Lower leg skin (tissue), 4 donors: ENCODE measurements at regions of chr2 and their contacts with region 1.

Region 1: GRCh38 chr2:209977386-209978239 is 24.8 kb upstream of the RPE start:
- DNase-seq: no peak
- H3K4me3 ChIP-seq: no peak overlapping the region
- CTCF ChIP-seq: no peak
- POLR2A ChIP-seq: no peak

Region 2: DNA sequence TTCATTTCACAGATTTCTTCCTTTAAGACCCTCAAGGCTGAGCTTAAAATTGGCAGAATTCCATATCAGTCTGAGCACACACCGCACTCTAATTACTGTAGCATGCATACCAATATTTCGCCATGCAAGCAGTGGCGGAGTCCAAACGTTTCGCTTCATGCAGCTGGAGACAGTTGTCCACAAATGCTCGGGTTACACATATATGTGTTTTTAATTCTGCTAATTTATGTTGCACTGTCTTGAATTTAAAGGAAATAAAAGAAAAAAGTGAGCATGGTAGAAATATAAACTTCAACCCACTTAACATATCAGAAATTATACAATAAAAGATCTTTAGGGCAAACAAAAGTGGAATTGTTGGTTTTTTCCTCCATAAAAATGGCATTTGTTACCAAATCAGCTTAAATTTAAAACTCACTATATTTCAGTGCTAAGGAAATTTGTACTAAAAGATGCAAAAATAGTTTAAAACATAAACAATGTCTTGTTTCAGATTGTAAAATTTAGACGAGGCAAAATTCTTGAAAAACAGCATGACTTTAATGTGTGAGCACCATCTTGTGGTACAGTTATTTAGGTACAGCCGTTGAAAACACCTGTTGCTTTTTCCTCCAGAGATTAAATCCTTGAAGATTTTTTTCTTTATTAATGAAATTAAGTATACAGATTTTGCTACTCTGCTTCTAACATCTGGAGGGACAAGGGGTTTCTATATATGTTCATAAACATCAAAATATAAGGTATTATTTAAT is 217.7 kb after region 1 on chr2:
- intact Hi-C with region 1: loop called (anchors 5 kb)
- DNase-seq: no peak
- H3K4me3 ChIP-seq: no peak overlapping the region
- CTCF ChIP-seq: no peak
- POLR2A ChIP-seq: no peak

Region 3: GRCh38 chr2:210606001-210606400 is 628.4 kb after region 1 on chr2:
- intact Hi-C with region 1: no loop called
- DNase-seq: no peak
- H3K4me3 ChIP-seq: no peak overlapping the region
- CTCF ChIP-seq: no peak
- POLR2A ChIP-seq: no peak

Region 4: GRCh38 chr2:210873631-210874030 is 896.0 kb after region 1 on chr2:
- intact Hi-C with region 1: no loop called
- DNase-seq: no peak
- H3K4me3 ChIP-seq: no peak overlapping the region
- CTCF ChIP-seq: no peak
- POLR2A ChIP-seq: no peak